K562 (cell line): ENCODE measurements at regions of chr12 and their contacts with region 1.

Region 1: DNA sequence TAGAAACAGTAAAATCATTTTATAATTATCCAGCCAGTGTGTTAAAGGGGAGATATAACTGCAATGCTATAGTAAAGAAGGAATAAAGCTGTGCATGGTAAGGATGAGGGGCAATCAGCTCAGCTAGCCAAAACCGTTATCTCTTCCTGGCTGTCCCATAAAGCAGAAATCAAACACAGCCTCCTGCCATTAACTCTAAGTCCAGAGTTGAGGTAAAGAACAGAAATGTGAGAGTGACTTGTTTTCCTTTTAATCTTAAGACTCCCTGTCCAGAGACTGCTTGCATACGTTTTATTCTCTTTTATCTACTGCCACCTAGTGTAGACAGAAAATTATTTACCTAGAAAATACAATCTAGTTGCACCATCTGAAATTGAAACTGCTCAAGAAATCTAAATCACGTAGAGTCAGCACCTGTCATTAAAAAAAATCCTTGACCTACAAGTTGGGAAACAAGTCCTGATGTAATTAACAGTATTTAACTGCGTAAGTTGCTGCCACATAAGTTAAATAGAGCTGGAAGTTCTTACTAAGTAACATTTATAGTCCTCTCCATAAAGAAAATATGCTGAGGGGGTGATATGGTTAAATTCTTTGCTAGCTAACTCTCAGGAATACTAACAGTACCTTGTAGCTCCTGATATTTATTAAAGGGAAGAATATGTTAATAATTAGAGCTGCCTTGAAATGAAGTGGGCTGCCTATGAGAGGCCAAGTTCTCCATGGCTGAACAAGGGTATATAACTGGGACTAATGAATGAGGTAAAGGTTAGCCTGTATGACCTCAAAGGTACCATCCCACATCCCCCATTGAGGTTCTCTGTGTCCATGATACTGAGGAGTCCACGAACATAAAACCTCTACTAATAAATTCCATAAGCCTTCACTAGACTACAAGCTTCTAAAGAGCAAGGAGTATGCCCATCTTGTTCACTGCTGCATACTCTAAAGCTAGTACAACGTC is 62.7 kb downstream of the GALNT4 start:
- DNase-seq: peak; percentile 14 to 47 (median 27)
- ATAC-seq: peak; percentile 94
- H3K4me3 ChIP-seq: no peak overlapping the region
- H3K27ac ChIP-seq: no peak overlapping the region
- H3K4me1 ChIP-seq: no peaks in the 10 kb centered on the region
- H3K27me3 ChIP-seq: no peaks in the 10 kb centered on the region
- CTCF ChIP-seq: peak; percentile 41 to 73 (median 49); a peak in 4 of 6 replicates
- EP300 ChIP-seq: no peak
- POLR2A ChIP-seq: no peak
- RAD21 ChIP-seq: peak; percentile 95 to 97

Region 2: DNA sequence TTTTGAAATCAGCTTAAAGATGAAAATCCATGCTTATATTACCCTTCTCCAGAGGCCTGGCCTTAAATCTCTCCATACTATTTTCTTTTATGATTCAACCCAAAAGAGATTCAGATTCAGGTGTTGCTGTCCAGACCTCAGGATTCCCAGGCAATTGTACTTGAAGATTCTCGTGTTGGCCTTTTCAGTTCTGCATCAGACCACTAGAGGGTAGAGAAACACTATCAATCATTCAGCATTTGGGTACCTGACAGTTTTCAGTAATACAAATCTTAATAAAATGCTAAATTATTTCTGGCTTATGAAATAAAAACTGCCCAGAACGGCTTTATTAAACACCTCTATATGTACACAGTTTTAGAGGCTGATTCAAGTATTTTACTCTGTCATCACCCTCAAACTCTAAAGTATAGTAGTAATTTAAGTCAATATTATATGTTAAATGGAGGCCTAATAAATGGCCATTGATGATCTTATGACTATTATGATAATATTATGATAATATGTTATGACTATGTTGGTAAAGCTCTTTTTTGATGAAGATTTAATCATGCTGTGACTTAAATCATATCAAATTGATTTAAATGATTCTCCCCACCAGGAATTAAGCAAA is 410.8 kb before region 1 on chr12:
- CTCF ChIA-PET with region 1: interaction called, 12 read pairs
- POLR2A ChIA-PET with region 1: no interaction called
- in situ Hi-C with region 1: loop called (anchors 10 kb)
- intact Hi-C with region 1: loop called (anchors 1 kb)
- DNase-seq: peak; percentile 30 to 53 (median 50)
- ATAC-seq: peak; percentile 49; the same call in 1 of the 3 replicates
- H3K4me3 ChIP-seq: no peak overlapping the region
- H3K27ac ChIP-seq: no peak overlapping the region
- H3K4me1 ChIP-seq: no peaks in the 10 kb centered on the region
- H3K27me3 ChIP-seq: no peaks in the 10 kb centered on the region
- CTCF ChIP-seq: peak; percentile 37 to 58 (median 53); a peak in 5 of 6 replicates
- EP300 ChIP-seq: no peak
- POLR2A ChIP-seq: no peak
- RAD21 ChIP-seq: peak; percentile 95 to 96

Region 3: GRCh38 chr12:89389755-89390661 is 71.9 kb before region 1 on chr12:
- CTCF ChIA-PET with region 1: no interaction called
- POLR2A ChIA-PET with region 1: no interaction called
- in situ Hi-C with region 1: no loop called
- intact Hi-C with region 1: loop called (anchors 5 kb)
- DNase-seq: no peak
- ATAC-seq: no peak
- H3K4me3 ChIP-seq: no peak overlapping the region
- H3K27ac ChIP-seq: no peak overlapping the region
- H3K4me1 ChIP-seq: peaks cover 2 to 45% of the 10 kb centered on the region in 2 experiments; a peak in 3 of 5 replicates
- H3K27me3 ChIP-seq: no peaks in the 10 kb centered on the region
- CTCF ChIP-seq: no peak
- EP300 ChIP-seq: no peak
- POLR2A ChIP-seq: no peak
- RAD21 ChIP-seq: no peak

Region 4: DNA sequence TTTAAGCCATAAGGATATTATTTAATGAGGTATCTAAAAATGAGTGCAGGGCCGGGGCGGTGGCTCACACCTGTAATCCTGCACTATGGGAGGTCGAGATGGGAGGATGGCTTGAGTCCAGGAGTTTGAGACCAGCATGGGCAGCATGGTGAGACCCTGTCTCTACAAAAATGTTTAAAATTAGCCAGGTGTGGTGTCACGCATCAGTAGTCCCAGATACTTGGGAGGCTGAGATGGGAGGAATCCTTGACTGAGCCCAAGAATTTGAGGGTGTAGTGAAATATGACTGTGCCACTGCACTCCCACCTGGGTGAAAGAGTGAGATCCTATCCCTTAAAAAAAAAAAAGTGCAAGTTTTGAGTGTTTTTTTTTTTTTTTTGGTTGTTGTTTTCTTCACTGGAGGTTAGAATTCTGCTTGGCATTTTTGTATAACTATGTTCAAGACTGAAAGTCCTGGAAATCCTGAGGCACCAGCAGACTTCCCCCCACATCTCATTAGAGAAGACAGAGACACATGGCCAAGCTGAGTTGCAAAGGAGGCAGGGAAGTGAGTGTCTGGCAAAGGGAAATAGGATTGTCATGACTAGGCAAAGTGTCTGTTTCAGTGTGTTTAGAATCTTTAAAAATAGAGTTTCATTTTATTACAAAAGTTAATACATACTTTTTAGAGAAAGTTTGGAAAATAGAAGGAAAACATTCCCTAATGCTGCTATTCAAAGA is 56.1 kb before region 1 on chr12:
- CTCF ChIA-PET with region 1: no interaction called
- POLR2A ChIA-PET with region 1: no interaction called
- in situ Hi-C with region 1: no loop called
- intact Hi-C with region 1: no loop called
- DNase-seq: no peak
- ATAC-seq: no peak
- H3K4me3 ChIP-seq: no peak overlapping the region
- H3K27ac ChIP-seq: no peak overlapping the region
- H3K4me1 ChIP-seq: peaks cover 0 to 7% of the 10 kb centered on the region in 2 experiments; a peak in 2 of 5 replicates
- H3K27me3 ChIP-seq: peaks cover 0 to 1% of the 10 kb centered on the region in 2 experiments; a peak in 2 of 5 replicates
- CTCF ChIP-seq: no peak
- EP300 ChIP-seq: no peak
- POLR2A ChIP-seq: no peak
- RAD21 ChIP-seq: no peak

Region 5: DNA sequence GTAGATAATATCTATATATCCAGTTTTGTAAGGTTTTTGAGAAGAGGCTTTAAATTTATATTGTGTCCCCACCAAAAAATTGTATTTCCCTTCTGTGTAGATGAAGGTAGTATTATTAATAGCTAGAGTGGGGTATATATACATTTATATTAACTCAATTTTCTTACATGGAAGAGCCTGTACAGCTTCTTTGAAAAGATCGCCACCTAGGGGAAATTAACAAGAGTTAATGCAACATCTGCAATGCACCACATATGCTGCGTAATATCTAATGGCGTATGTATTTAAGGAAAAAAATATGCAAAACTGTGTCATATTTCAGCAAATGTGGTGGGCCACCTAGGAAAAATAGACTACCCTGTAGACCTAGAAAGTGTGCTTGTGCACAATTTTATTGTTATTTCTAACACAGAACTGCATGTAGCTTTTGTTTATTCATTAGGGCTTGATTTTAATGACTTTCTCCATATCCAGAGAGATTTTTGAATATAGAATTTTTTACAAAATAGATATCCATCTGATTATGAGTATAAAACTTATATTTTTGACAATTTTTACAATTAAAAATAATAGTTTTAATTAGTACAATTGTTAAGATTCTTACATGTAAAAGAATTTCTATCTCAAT is 1479.1 kb after region 1 on chr12:
- CTCF ChIA-PET with region 1: no interaction called
- POLR2A ChIA-PET with region 1: no interaction called
- in situ Hi-C with region 1: loop called (anchors 25 kb)
- intact Hi-C with region 1: no loop called
- DNase-seq: peak in 3 of 4 experiments; percentile 11 to 40 (median 20)
- ATAC-seq: peak; percentile 84
- H3K4me3 ChIP-seq: no peak overlapping the region
- H3K27ac ChIP-seq: no peak overlapping the region
- H3K4me1 ChIP-seq: no peaks in the 10 kb centered on the region
- H3K27me3 ChIP-seq: no peaks in the 10 kb centered on the region
- CTCF ChIP-seq: peak; percentile 36 to 67 (median 42); a peak in 5 of 6 replicates
- EP300 ChIP-seq: no peak
- POLR2A ChIP-seq: no peak
- RAD21 ChIP-seq: peak; percentile 44 to 66